SK-N-SH (cell line): ENCODE measurements at regions of chr11 and their contacts with region 1.

Region 1: GRCh38 chr11:75582895-75583717 is 21.1 kb downstream of the SERPINH1 start:
- DNase-seq: peak; percentile 93
- H3K4me3 ChIP-seq: peak overlapping the region; percentile 51 to 59
- H3K27ac ChIP-seq: peak overlapping the region; percentile 56 to 93
- H3K4me1 ChIP-seq: peaks cover 15 to 20% of the 10 kb centered on the region in 2 experiments; a peak in 2 of 4 replicates
- H3K27me3 ChIP-seq: no peaks in the 10 kb centered on the region
- CTCF ChIP-seq: peak; percentile 50
- EP300 ChIP-seq: no peak
- RAD21 ChIP-seq: no peak; the same call in 1 of the 2 replicates

Region 2: DNA sequence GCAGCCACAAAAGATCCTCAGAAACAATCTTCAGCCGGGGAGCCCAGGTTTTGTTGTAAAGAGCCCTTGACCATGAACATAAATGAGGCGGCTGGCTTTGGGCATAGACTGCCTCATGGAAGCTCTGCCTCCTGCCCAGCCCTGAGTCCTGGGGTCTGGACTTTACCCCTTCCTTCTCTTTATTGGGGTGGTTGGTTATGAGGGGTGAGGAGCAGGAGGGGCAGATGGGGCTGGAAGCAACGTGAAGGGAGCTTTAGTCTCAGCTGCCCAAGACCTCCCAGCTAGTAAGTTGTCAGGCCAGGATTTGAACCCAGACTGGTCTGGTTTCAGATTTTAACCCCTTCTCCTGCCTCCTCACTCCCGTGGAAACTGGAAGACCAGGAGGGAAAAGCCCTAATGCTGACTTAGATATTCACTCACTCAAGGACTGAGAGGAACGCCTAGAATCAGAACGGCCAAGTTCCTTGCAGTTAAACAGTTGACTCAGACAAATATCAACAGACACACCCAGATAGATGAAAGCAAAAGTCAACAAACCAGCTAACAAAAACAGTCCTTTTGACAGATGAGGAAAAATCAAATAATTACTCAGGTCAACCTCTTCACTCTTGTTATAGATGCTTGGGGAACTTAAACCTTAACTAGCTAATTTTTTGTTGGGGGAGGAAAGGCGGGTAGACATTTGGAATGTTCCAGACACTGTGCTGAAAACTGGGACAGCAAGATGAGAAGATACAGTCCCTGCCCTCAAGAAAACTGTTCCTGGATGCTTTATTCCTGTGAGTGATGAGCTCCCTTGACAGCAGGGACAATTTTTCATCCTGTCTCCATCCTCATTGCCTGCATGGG is 210.9 kb before region 1 on chr11:
- CTCF ChIA-PET with region 1: no interaction called
- POLR2A ChIA-PET with region 1: no interaction called
- DNase-seq: no peak
- H3K4me3 ChIP-seq: no peak overlapping the region
- H3K27ac ChIP-seq: no peak overlapping the region
- H3K4me1 ChIP-seq: no peaks in the 10 kb centered on the region
- H3K27me3 ChIP-seq: no peaks in the 10 kb centered on the region
- CTCF ChIP-seq: no peak
- EP300 ChIP-seq: no peak
- RAD21 ChIP-seq: no peak

Region 3: GRCh38 chr11:75554258-75555022 is 28.7 kb before region 1 on chr11:
- CTCF ChIA-PET with region 1: interaction called, 41 read pairs
- POLR2A ChIA-PET with region 1: interaction called, 39 read pairs
- DNase-seq: peak; percentile 96
- H3K4me3 ChIP-seq: peak overlapping the region in 1 of 2 experiments; percentile 14; a peak in 1 of 4 replicates
- H3K27ac ChIP-seq: peak overlapping the region; percentile 58 to 98; a peak in 3 of 4 replicates
- H3K4me1 ChIP-seq: peaks cover 38 to 58% of the 10 kb centered on the region in 2 experiments
- H3K27me3 ChIP-seq: no peaks in the 10 kb centered on the region
- CTCF ChIP-seq: no peak
- EP300 ChIP-seq: peak; percentile 20 to 89; a peak in 3 of 4 replicates
- RAD21 ChIP-seq: no peak; the same call in 1 of the 2 replicates

Region 4: DNA sequence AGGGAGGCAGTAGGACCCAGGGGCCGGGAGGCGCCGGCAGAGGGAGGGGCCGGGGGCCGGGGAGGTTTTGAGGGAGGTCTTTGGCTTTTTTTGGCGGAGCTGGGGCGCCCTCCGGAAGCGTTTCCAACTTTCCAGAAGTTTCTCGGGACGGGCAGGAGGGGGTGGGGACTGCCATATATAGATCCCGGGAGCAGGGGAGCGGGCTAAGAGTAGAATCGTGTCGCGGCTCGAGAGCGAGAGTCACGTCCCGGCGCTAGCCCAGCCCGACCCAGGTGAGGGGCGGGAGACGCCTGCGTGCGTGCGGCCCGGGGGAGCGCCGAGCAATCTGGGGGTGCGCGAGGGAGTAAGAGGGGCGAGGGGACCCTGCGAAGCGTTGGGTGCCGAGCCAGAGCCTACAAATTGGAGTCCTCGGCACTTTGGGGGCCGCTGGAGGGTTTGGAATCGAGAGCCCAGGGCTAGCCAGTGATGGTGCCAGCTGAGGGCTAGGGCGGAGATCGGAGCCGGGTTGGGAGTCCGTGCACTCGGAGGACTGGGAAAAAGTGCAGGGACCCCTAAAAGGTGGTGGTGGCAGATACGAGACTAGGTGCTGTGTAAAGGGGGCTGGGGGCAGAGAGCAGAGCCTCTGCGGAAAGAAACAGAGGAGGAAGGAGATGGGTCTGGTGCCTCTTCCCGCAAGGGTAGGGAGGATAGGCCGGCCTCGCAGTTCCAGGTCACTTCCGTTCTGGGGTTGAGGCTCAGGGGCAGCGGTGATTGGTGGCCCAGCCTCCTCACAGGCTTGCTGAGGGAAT is 20.9 kb before region 1 on chr11 and contains the start of gene SERPINH1:
- CTCF ChIA-PET with region 1: interaction called, 45 read pairs
- POLR2A ChIA-PET with region 1: interaction called, 17 read pairs
- DNase-seq: peak; percentile 95
- H3K4me3 ChIP-seq: peak within 1 kb of the TSS; percentile 77 to 89
- H3K27ac ChIP-seq: peak within 1 kb of the TSS; percentile 92 to 98
- H3K4me1 ChIP-seq: peaks cover 46 to 60% of the 10 kb centered on the region in 2 experiments
- H3K27me3 ChIP-seq: no peaks in the 10 kb centered on the region
- CTCF ChIP-seq: no peak
- EP300 ChIP-seq: peak; percentile 43 to 87; a peak in 3 of 4 replicates
- RAD21 ChIP-seq: no peak
- polyA plus RNA-seq, gene SERPINH1: 221 and 293 TPM in 2 replicates

Region 5: DNA sequence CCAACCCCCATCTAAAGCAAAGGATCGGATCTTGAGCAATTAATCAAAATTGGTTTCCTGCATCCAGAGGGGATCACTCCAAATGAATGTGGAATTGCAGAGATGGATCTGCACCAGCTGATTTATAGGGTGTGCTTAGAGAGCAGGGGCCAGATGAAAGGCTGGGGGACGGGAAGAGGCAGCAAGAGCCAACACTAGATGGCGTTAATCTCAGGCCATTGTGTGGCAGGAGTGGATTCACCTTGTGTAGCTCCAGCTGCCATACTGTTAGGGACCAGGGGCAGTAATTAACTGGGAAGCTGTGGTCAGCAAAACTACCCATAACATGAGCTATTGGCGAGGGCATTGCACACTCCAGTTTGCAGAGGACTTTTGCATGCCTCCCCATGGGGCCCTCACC is 14.5 kb after region 1 on chr11:
- CTCF ChIA-PET with region 1: interaction called, 15 read pairs
- POLR2A ChIA-PET with region 1: interaction called, 9 read pairs
- DNase-seq: peak; percentile 78
- H3K4me3 ChIP-seq: no peak overlapping the region; a peak in 1 of 4 replicates
- H3K27ac ChIP-seq: no peak overlapping the region
- H3K4me1 ChIP-seq: peaks cover 5 to 17% of the 10 kb centered on the region in 2 experiments; a peak in 3 of 4 replicates
- H3K27me3 ChIP-seq: no peaks in the 10 kb centered on the region
- CTCF ChIP-seq: peak; percentile 65
- EP300 ChIP-seq: no peak
- RAD21 ChIP-seq: peak; percentile 79

Region 6: DNA sequence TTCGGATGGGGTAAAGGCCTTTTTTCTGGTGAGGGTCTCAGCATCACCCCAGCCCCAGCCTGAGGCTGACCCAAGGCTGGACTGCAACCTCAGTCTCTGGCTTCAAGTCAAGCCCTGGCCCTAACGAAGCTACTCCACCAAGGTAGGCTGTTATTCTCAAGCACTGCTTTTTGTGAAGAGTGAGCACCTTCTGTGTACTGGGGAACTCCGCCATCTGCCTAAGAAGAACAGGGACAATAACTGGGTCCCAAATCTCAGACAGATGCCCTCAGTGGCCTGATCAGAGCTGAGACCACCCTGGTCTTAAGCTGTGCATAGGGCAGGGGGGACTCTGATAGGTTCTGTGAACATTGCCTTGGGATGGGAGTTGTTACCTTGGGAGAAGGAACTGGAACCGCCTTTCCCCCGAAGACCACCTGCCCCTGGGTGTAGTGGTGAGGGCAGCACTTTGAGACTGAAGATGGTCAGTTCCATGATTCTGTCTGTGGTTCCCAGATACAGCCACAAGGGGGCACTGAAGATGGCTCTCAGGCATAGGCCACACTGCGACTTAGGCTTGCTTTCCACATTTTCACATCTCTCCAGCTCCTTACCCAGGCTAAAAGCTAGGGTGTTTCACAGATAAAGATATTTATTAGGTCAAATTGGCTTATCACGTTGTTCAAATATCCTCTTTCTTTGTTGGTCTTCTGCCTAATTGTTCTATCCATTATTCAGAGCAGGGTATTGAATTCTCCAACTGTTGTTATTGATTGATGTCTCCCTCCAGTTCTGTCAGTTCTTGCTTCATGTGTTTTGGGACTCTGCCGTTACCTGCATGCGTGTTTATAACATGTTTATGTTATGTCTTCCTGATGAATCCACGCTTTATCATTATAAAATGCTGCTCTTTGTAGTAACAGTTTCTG is 220.1 kb after region 1 on chr11:
- CTCF ChIA-PET with region 1: no interaction called
- POLR2A ChIA-PET with region 1: no interaction called
- DNase-seq: peak; percentile 79
- H3K4me3 ChIP-seq: no peak overlapping the region
- H3K27ac ChIP-seq: no peak overlapping the region
- H3K4me1 ChIP-seq: no peaks in the 10 kb centered on the region; a peak in 1 of 4 replicates
- H3K27me3 ChIP-seq: no peaks in the 10 kb centered on the region
- CTCF ChIP-seq: peak; percentile 86
- EP300 ChIP-seq: no peak
- RAD21 ChIP-seq: peak; percentile 91

Region 7: DNA sequence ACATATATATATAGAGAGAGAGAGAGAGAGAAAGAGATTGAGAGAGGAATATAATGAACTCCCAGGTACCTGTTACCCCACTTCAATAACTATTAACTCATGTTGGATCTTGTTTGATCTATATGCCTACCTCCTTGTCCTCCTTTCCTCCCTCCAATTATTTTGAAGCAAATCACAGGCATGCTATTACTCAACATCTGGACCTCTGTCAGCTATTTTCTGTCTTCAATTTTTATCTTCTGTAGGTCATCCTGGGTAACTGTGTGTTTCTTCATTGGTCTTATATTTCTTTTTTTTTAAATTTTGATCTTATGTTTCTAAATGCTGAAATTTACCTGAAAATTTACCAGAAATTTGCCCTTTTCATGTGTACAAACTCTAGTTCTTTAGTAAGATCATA is 256.7 kb after region 1 on chr11:
- CTCF ChIA-PET with region 1: no interaction called
- POLR2A ChIA-PET with region 1: no interaction called
- DNase-seq: no peak
- H3K4me3 ChIP-seq: no peak overlapping the region
- H3K27ac ChIP-seq: no peak overlapping the region
- H3K4me1 ChIP-seq: peaks cover 0 to 8% of the 10 kb centered on the region in 2 experiments; a peak in 3 of 4 replicates
- H3K27me3 ChIP-seq: no peaks in the 10 kb centered on the region
- CTCF ChIP-seq: no peak
- EP300 ChIP-seq: no peak
- RAD21 ChIP-seq: no peak